ENCODE measurements at regions of chr9 and their contacts with region 1.

Region 1: GRCh38 chr9:78369639-78370219 is 72.8 kb downstream of the PSAT1 start:
- DNase-seq: peak; percentile 10 to 54 (median 24)
- H3K4me3 ChIP-seq: no peak overlapping the region
- H3K4me3 Mint-ChIP-seq: no peak overlapping the region
- H3K27ac ChIP-seq: no peak overlapping the region
- H3K27ac Mint-ChIP-seq: no peak overlapping the region
- H3K4me1 ChIP-seq: no peaks in the 10 kb centered on the region
- H3K4me1 Mint-ChIP-seq: no peaks in the 10 kb centered on the region
- H3K27me3 ChIP-seq: no peaks in the 10 kb centered on the region
- H3K27me3 Mint-ChIP-seq: peaks cover 6 to 45% of the 10 kb centered on the region in 2 donors

Region 2: GRCh38 chr9:78261403-78262001 is 108.2 kb before region 1 on chr9:
- CTCF ChIA-PET with region 1: interaction called, 14 read pairs
- POLR2A ChIA-PET with region 1: no interaction called
- DNase-seq: peak in 2 of 5 donors; percentile 4 to 17
- H3K4me3 ChIP-seq: no peak overlapping the region
- H3K4me3 Mint-ChIP-seq: no peak overlapping the region
- H3K27ac ChIP-seq: no peak overlapping the region
- H3K27ac Mint-ChIP-seq: no peak overlapping the region
- H3K4me1 ChIP-seq: no peaks in the 10 kb centered on the region
- H3K4me1 Mint-ChIP-seq: no peaks in the 10 kb centered on the region
- H3K27me3 ChIP-seq: no peaks in the 10 kb centered on the region
- H3K27me3 Mint-ChIP-seq: no peaks in the 10 kb centered on the region

Region 3: DNA sequence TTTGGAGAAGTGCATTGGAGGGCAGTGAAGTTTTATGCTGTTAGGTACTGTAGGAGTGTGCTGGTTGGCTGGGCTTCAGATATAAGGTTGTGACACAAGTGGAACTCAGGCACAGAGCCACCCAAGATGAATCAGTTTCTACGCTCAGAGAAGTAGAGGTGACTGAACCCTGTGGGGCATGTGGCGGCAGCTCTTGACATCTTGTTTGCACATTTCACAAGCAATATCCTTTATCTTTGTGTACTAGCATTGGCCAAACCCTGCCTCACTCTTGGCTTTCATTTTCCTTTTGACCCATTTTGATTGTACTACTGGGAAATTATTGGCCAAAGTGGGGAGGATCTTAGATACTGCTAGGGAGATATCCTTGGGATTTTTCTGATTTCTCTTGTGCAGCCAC is 37.2 kb after region 1 on chr9:
- CTCF ChIA-PET with region 1: no interaction called
- POLR2A ChIA-PET with region 1: no interaction called
- DNase-seq: no peak
- H3K4me3 ChIP-seq: no peak overlapping the region
- H3K4me3 Mint-ChIP-seq: no peak overlapping the region
- H3K27ac ChIP-seq: no peak overlapping the region
- H3K27ac Mint-ChIP-seq: no peak overlapping the region
- H3K4me1 ChIP-seq: no peaks in the 10 kb centered on the region
- H3K4me1 Mint-ChIP-seq: no peaks in the 10 kb centered on the region
- H3K27me3 ChIP-seq: no peaks in the 10 kb centered on the region
- H3K27me3 Mint-ChIP-seq: peaks cover 3 to 22% of the 10 kb centered on the region in 2 donors

Measured in CD8-positive, alpha-beta memory T cell (primary cell).